Ascending aorta (tissue), 2 donors: ENCODE measurements at regions of chr17 and their contacts with region 1.

Region 1: DNA sequence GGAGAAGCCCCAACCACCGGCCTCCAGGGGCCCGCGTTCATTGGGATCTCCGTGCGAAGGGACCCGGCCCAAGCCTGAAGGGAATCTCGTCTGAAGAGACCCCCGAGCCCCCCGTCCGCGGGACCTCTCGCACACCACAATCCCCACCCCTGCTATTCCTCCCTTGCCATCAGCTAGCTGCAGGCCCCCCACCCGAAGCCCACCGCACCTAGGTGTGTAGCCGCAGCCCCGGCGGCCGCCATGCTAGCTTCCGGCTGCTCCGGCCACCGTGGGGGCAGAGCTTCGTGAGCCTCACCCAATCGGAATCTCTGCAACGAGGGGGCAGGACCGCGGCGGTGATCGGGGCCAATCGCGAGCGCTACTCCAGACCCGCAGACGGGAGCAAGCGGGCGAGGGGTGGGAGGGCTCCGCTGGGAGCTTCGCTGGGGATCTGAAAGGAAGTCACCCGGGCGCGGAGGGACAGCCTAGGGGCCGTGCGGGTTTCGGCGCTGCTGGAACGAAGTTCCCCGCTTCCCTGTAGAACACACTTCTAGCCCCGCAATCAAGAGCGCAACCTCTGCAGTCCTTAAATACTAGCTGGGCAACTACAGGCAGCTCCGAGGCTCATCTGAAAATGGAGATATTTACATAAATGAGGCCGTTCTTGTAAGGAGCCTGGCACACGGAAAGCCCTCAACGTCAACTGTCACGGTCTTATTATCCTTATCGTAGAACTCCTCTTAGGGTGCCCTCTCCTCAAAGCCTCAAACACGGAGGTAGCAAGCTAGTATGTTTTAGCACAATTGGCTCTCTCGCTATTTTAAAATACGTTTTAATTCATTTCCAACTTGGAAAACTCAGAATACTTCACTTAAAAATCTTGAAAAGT is at the start of gene PIGS:
- DNase-seq: peak; percentile 79 to 96
- H3K4me3 ChIP-seq: peak within 1 kb of the TSS; percentile 91 to 95
- H3K27ac ChIP-seq: peak within 1 kb of the TSS; percentile 75 to 85
- H3K4me1 ChIP-seq: peaks cover 0 to 23% of the 10 kb centered on the region in 2 donors
- H3K27me3 ChIP-seq: no peaks in the 10 kb centered on the region
- CTCF ChIP-seq: no peak
- total RNA-seq, gene PIGS: 44.6 TPM

Region 2: GRCh38 chr17:28552246-28552999 is 19.1 kb before region 1 on chr17 and contains the start of gene UNC119:
- intact Hi-C with region 1: loop called (anchors 1 kb)
- DNase-seq: peak in 1 of 2 donors; percentile 81
- H3K4me3 ChIP-seq: peak within 1 kb of the TSS; percentile 88 to 90
- H3K27ac ChIP-seq: peak within 1 kb of the TSS; percentile 59 to 73
- H3K4me1 ChIP-seq: peaks cover 3 to 11% of the 10 kb centered on the region in 2 donors
- H3K27me3 ChIP-seq: no peaks in the 10 kb centered on the region
- CTCF ChIP-seq: no peak
- total RNA-seq, gene UNC119: 33.8 TPM

Region 3: GRCh38 chr17:28598799-28599310 is 27.4 kb after region 1 on chr17 and contains the start of gene SPAG5:
- intact Hi-C with region 1: loop called (anchors 1 kb)
- DNase-seq: peak; percentile 81 to 97
- H3K4me3 ChIP-seq: peak within 1 kb of the TSS; percentile 85 to 86
- H3K27ac ChIP-seq: peak within 1 kb of the TSS; percentile 99 to 100
- H3K4me1 ChIP-seq: peaks cover 4 to 6% of the 10 kb centered on the region in 2 donors
- H3K27me3 ChIP-seq: no peaks in the 10 kb centered on the region
- CTCF ChIP-seq: no peak
- total RNA-seq, gene SPAG5: 1.6 TPM

Region 4: DNA sequence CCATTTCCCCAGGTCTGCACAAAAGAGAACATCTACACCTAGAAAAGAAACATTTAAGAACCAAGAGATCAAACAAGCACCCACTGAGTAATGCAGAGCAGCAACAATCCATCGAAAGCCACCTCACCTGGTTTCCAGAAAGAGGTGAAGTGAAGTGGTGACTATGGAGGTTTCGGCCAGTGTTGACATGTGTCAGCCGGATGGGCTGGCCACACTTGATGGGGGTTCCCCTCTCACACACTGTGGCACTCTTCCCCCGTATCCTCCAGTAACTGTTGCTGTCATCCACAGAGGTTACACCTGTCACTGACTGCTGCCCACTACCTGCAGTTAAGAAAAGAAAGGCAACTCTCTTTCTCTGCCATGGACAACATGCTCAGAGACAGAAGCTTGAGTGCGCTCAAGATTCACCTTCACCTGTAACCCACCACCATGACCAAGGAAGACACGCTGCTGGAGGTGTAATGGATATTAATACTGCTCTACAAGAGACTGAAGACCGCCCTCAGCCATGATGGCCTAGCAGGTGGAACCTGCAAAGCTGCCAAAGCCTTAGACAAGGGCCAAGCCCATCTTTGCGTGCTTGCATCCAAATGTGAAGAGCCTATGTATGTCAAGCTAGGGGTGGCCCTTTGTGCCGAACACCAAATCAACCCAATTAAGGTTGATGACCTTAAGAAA is 83.8 kb after region 1 on chr17:
- intact Hi-C with region 1: no loop called
- DNase-seq: no peak
- H3K4me3 ChIP-seq: no peak overlapping the region
- H3K27ac ChIP-seq: no peak overlapping the region
- H3K4me1 ChIP-seq: peaks cover 0 to under 1% of the 10 kb centered on the region in 2 donors
- H3K27me3 ChIP-seq: no peaks in the 10 kb centered on the region
- CTCF ChIP-seq: no peak